Dendritic cell treated with granulocyte-macrophage colony-stimulating factor and Interleukin-4, amounts not matched to agents 40 ng/mL and 50 ng/mL, for 4 days (primary cell): ENCODE measurements at regions of chr1 and their contacts with region 1.

Region 1: DNA sequence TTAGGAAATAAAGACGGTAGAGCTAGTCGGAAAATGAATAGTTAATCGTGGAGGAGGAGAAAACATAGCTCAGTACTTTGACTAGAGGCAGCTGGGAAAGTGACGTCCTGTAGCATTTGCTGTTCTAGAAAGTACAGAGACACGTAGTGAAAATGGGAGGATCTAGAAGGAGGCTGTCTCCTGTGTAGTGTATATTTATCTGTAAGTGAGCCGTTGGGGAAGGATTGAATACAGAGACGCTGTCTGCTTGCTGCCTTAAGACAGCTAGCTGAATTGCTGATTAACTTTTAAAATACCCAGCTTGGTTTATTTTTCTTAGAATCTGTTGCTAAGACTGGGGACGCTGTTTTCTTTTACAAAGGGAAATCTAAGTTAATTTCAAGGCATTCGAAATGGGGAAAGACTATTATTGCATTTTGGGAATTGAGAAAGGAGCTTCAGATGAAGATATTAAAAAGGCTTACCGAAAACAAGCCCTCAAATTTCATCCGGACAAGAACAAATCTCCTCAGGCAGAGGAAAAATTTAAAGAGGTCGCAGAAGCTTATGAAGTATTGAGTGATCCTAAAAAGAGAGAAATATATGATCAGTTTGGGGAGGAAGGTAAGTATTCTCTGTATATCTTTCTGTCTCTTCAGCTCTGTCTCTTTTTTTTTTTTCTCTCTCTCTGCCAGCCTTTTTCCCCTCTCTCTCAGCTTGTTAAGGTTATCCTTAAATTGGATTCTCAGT is at the start of gene DNAJB4:
- H3K4me3 Mint-ChIP-seq: peak within 1 kb of the TSS; percentile 91
- H3K27ac Mint-ChIP-seq: peak within 1 kb of the TSS; percentile 96
- H3K4me1 Mint-ChIP-seq: peaks cover 15% of the 10 kb centered on the region
- H3K27me3 Mint-ChIP-seq: no peaks in the 10 kb centered on the region

Region 2: GRCh38 chr1:77978969-77979876 is 25.7 kb before region 1 on chr1 and contains the start of gene FUBP1:
- intact Hi-C with region 1: loop called (anchors 1 kb)
- H3K4me3 Mint-ChIP-seq: no peak within 1 kb of the TSS
- H3K27ac Mint-ChIP-seq: no peak within 1 kb of the TSS
- H3K4me1 Mint-ChIP-seq: peaks cover 27% of the 10 kb centered on the region
- H3K27me3 Mint-ChIP-seq: no peaks in the 10 kb centered on the region